ENCODE measurements at regions of chr9 and their contacts with region 1.

Region 1: GRCh38 chr9:104968025-104968982 is 40.3 kb upstream of the ABCA1 start:
- DNase-seq: peak; percentile 82 to 92 (median 91)
- H3K4me3 ChIP-seq: peak overlapping the region; percentile 64 to 92 (median 80)
- H3K27ac ChIP-seq: peak overlapping the region; percentile 54 to 55
- H3K4me1 ChIP-seq: peaks cover 2 to 20% (median 16%) of the 10 kb centered on the region in 4 experiments
- H3K27me3 ChIP-seq: peaks cover 0 to 1% (median 0%) of the 10 kb centered on the region in 5 experiments

Region 2: GRCh38 chr9:104747558-104748358 is 220.5 kb before region 1 on chr9 and contains the start of gene NIPSNAP3A:
- CTCF ChIA-PET with region 1: no interaction called
- POLR2A ChIA-PET with region 1: no interaction called
- DNase-seq: peak; percentile 87 to 93 (median 91)
- H3K4me3 ChIP-seq: peak within 1 kb of the TSS; percentile 85 to 98 (median 91)
- H3K27ac ChIP-seq: peak within 1 kb of the TSS; percentile 87 to 91
- H3K4me1 ChIP-seq: peaks cover 17 to 46% (median 30%) of the 10 kb centered on the region in 4 experiments
- H3K27me3 ChIP-seq: no peaks in the 10 kb centered on the region

Region 3: DNA sequence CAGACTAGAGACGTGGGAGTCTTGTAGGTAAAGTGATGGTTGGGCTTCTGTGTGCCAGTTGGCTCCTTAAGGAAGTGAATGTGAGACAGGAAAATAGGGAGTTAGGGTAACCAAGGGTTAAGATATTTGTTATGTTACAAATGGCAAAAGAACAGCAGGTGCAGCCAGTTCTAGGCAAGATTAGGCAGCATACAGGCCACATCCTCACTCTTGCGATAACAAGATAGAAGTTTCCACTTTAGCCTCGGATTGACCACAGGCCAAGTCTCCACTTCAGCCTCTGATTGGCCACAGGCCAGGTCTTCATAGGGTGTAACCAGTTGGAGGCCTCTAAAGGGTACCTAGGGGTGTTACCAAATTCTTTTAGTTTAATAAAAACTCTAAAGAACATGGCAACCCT is 14.2 kb after region 1 on chr9:
- CTCF ChIA-PET with region 1: interaction called, 47 read pairs
- POLR2A ChIA-PET with region 1: interaction called, 3 read pairs
- DNase-seq: peak in 2 of 3 donors; percentile 56 to 58
- H3K4me3 ChIP-seq: no peak overlapping the region
- H3K27ac ChIP-seq: no peak overlapping the region
- H3K4me1 ChIP-seq: peaks cover 0 to 40% (median 31%) of the 10 kb centered on the region in 4 experiments
- H3K27me3 ChIP-seq: no peaks in the 10 kb centered on the region

Region 4: DNA sequence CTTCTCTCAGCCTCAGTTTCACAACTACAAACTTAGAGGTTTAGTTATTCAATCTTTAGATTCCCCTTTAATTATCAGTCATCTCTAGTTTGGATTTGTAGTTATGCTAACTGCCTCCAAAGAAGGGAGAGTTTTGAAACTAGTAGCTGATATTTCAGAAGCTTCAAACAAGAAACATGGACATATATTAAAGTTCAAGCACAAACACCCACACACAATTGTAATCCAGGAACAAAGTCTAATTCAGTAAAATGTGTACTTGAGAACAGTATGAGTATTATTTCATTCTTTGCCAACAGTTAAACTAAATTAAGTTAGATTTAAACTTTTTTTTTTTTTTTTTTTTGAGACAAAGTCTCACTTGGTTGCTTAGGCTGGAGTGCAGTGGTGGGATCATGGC is 30.8 kb after region 1 on chr9:
- CTCF ChIA-PET with region 1: no interaction called
- POLR2A ChIA-PET with region 1: no interaction called
- DNase-seq: no peak
- H3K4me3 ChIP-seq: no peak overlapping the region
- H3K27ac ChIP-seq: no peak overlapping the region
- H3K4me1 ChIP-seq: peaks cover 0 to 1% (median under 1%) of the 10 kb centered on the region in 4 experiments
- H3K27me3 ChIP-seq: no peaks in the 10 kb centered on the region

Region 5: GRCh38 chr9:105150991-105151685 is 182.8 kb after region 1 on chr9:
- CTCF ChIA-PET with region 1: no interaction called
- POLR2A ChIA-PET with region 1: no interaction called
- DNase-seq: no peak
- H3K4me3 ChIP-seq: no peak overlapping the region
- H3K27ac ChIP-seq: no peak overlapping the region
- H3K4me1 ChIP-seq: peaks cover 4 to 11% (median 7%) of the 10 kb centered on the region in 4 experiments
- H3K27me3 ChIP-seq: no peaks in the 10 kb centered on the region